Activated T-helper 1 cell treated with anti-CD3 and anti-CD28 coated beads, Interleukin-12 subunit alpha, Interleukin-12 subunit beta, Interleukin-2, Interleukin-4 antibody, amounts not matched to agents 30 ng/mL and 10 ng/mL and 1 ng/mL, durations not matched to agents 14 hours and 24 hours and 36 hours (primary cell): ENCODE measurements at regions of chr5 and their contacts with region 1.

Region 1: GRCh38 chr5:134609232-134609851 is 23.3 kb downstream of the SAR1B start:
- DNase-seq: no peak
- H3K4me3 Mint-ChIP-seq: peak overlapping the region; percentile 67
- H3K27ac Mint-ChIP-seq: peak overlapping the region; percentile 96
- H3K4me1 Mint-ChIP-seq: peaks cover 48% of the 10 kb centered on the region
- H3K27me3 Mint-ChIP-seq: no peaks in the 10 kb centered on the region

Region 2: GRCh38 chr5:133075572-133076536 is 1533.5 kb before region 1 on chr5:
- intact Hi-C with region 1: loop called (anchors 10 kb)
- DNase-seq: no peak
- H3K4me3 Mint-ChIP-seq: no peak overlapping the region
- H3K27ac Mint-ChIP-seq: peak overlapping the region; percentile 48
- H3K4me1 Mint-ChIP-seq: peaks cover 51% of the 10 kb centered on the region
- H3K27me3 Mint-ChIP-seq: no peaks in the 10 kb centered on the region

Region 3: DNA sequence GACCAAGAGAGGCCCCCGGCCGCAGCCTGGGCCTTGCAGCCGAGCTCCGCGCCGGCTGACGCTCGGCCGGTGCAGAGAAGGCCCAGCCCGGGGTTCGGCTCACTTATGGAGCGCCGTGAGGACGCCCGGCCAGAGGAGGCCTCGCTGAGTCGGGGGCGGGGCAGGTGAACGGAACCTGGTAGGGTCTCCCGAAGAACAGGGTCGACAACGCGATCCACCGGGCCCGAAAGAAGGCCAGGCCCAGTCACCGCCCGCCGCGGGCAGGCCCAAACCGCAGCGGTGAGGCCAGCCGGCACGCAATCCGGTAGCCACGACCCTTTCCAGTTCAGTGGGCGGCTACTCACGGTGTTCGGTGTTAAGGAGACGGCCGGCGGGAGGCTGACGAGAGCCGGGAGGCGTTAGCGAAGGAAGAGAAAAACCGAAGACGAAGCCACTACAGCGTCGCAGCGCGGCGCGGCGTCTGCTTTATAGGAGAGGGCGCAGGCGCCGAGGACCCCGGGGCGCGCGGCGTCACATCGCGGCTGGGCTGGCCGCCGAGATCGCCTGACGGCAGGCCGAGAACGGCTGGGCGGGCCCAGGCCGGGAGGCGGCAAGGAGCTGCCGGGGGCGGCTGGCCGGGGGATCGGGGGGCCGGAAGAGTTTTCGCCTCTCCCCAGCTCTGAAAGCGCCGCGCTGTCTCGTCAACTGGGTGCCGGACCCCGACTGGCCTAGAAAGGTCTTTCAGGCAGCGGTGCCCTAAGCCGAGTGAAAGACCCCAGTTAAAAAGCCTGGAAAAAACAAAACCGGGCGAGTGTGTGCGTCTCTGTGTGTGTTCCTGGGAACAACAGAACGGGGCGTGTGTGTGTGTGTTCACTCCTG is 432.6 kb before region 1 on chr5 and contains the start of gene SKP1:
- intact Hi-C with region 1: loop called (anchors 5 kb)
- DNase-seq: peak; percentile 85
- H3K4me3 Mint-ChIP-seq: peak within 1 kb of the TSS; percentile 96
- H3K27ac Mint-ChIP-seq: peak within 1 kb of the TSS; percentile 97
- H3K4me1 Mint-ChIP-seq: peaks cover 28% of the 10 kb centered on the region
- H3K27me3 Mint-ChIP-seq: peaks cover 6% of the 10 kb centered on the region
- total RNA-seq, gene SKP1: 259 and 265 TPM in 2 replicates

Region 4: GRCh38 chr5:134420343-134420742 is 189.0 kb before region 1 on chr5:
- intact Hi-C with region 1: no loop called
- DNase-seq: no peak
- H3K4me3 Mint-ChIP-seq: no peak overlapping the region
- H3K27ac Mint-ChIP-seq: no peak overlapping the region
- H3K4me1 Mint-ChIP-seq: no peaks in the 10 kb centered on the region
- H3K27me3 Mint-ChIP-seq: peaks cover 12% of the 10 kb centered on the region

Region 5: DNA sequence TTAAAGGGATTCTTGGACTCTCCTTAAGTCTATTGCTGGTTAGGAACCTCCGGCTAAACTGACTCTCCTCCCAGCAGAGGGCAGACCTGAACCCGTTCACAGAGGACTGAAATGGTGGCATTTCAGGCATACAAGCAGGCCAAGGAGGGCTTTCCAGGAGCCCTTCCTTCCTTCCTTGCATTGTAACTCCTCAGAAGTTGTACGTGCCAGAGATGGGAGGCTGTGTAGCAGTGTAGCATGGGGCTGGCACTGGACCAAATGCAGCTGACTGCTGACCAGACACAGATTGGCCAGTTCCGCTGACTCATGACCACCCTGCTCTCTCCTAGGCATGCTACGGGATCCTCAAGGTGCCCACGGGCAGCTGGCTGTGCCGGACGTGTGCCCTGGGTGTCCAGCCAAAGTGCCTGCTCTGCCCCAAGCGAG is 47.5 kb before region 1 on chr5:
- intact Hi-C with region 1: no loop called
- DNase-seq: no peak
- H3K4me3 Mint-ChIP-seq: no peak overlapping the region
- H3K27ac Mint-ChIP-seq: no peak overlapping the region
- H3K4me1 Mint-ChIP-seq: peaks cover 2% of the 10 kb centered on the region
- H3K27me3 Mint-ChIP-seq: no peaks in the 10 kb centered on the region

Region 6: GRCh38 chr5:134586866-134587524 is 22.3 kb before region 1 on chr5:
- intact Hi-C with region 1: loop called (anchors 2 kb)
- DNase-seq: peak; percentile 72
- H3K4me3 Mint-ChIP-seq: no peak overlapping the region
- H3K27ac Mint-ChIP-seq: peak overlapping the region; percentile 52
- H3K4me1 Mint-ChIP-seq: peaks cover 14% of the 10 kb centered on the region
- H3K27me3 Mint-ChIP-seq: no peaks in the 10 kb centered on the region

Region 7: GRCh38 chr5:134637161-134637582 is 27.8 kb after region 1 on chr5:
- intact Hi-C with region 1: loop called (anchors 1 kb)
- DNase-seq: no peak
- H3K4me3 Mint-ChIP-seq: no peak overlapping the region
- H3K27ac Mint-ChIP-seq: no peak overlapping the region
- H3K4me1 Mint-ChIP-seq: peaks cover 7% of the 10 kb centered on the region
- H3K27me3 Mint-ChIP-seq: no peaks in the 10 kb centered on the region

Region 8: DNA sequence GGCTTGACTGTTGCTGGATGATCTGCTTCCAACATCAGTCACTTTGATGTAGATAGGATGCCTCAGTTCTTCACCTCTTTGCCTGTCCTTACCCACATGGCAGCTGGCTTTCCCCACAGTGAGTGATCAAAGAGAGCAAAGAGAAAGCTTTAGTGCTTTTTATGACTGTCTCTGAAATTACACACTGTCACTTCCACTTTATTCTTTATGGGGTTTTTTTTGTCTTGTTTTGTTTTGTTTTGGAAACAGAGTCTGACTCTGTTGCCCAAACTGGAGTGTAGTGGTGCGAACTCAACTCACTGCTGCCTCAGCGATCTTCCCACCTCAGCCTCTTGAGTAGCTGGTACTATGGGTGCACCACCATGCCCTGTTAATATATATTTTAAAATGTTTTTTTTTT is 204.1 kb after region 1 on chr5:
- intact Hi-C with region 1: loop called (anchors 5 kb)
- DNase-seq: peak; percentile 29
- H3K4me3 Mint-ChIP-seq: no peak overlapping the region
- H3K27ac Mint-ChIP-seq: peak overlapping the region; percentile 77
- H3K4me1 Mint-ChIP-seq: peaks cover 9% of the 10 kb centered on the region
- H3K27me3 Mint-ChIP-seq: no peaks in the 10 kb centered on the region